ENCODE measurements at regions of chr2 and their contacts with region 1.

Region 1: GRCh38 chr2:74529357-74530238 is at the starts of genes AUP1 and HTRA2:
- DNase-seq: peak; percentile 96
- H3K4me3 Mint-ChIP-seq: peak within 1 kb of the TSS; percentile 98
- H3K27ac Mint-ChIP-seq: peak within 1 kb of the TSS; percentile 91
- H3K4me1 Mint-ChIP-seq: peaks cover 40% of the 10 kb centered on the region
- H3K27me3 Mint-ChIP-seq: no peaks in the 10 kb centered on the region
- total RNA-seq, gene AUP1: 77.4 to 78.5 TPM
- total RNA-seq, gene HTRA2: 39.0 to 39.7 TPM

Region 2: GRCh38 chr2:73736855-73737779 is 792.5 kb before region 1 on chr2 and contains the start of gene TPRKB:
- CTCF ChIA-PET with region 1: no interaction called
- intact Hi-C with region 1: no loop called
- DNase-seq: peak; percentile 99
- H3K4me3 Mint-ChIP-seq: peak within 1 kb of the TSS; percentile 88
- H3K27ac Mint-ChIP-seq: peak within 1 kb of the TSS; percentile 76
- H3K4me1 Mint-ChIP-seq: peaks cover 15% of the 10 kb centered on the region
- H3K27me3 Mint-ChIP-seq: no peaks in the 10 kb centered on the region
- total RNA-seq, gene TPRKB: 30.5 to 32.5 TPM

Region 3: DNA sequence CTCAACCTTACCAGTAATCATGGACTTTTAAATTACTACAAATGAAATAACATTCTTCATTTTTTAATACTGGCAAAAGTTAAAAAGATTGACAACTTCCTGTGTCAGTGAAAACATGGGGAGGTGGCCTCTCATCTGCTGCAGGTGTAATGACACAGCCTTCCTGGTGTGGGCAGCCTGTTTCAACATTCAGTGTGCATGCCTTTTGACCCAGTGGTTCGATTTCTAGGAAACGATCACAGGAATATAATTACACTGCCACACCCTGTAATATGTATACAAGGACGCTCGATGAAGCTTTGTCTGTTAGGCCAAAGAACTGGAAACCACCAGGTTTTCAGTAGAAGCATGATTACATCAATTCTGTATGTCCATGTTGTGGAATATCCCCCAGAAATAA is 262.5 kb before region 1 on chr2:
- CTCF ChIA-PET with region 1: no interaction called
- intact Hi-C with region 1: loop called (anchors 5 kb)
- DNase-seq: peak; percentile 82
- H3K4me3 Mint-ChIP-seq: no peak overlapping the region
- H3K27ac Mint-ChIP-seq: peak overlapping the region; percentile 53
- H3K4me1 Mint-ChIP-seq: peaks cover 12% of the 10 kb centered on the region
- H3K27me3 Mint-ChIP-seq: no peaks in the 10 kb centered on the region

Region 4: GRCh38 chr2:74421221-74421870 is 108.3 kb before region 1 on chr2 and contains the starts of genes C2orf81 and WDR54:
- CTCF ChIA-PET with region 1: no interaction called
- intact Hi-C with region 1: loop called (anchors 1 kb)
- DNase-seq: peak; percentile 90
- H3K4me3 Mint-ChIP-seq: peak within 1 kb of the TSS; percentile 99
- H3K27ac Mint-ChIP-seq: peak within 1 kb of the TSS; percentile 88
- H3K4me1 Mint-ChIP-seq: peaks cover 24% of the 10 kb centered on the region
- H3K27me3 Mint-ChIP-seq: no peaks in the 10 kb centered on the region
- total RNA-seq, gene C2orf81: 2.6 to 3.4 TPM
- total RNA-seq, gene WDR54: 67.2 to 70.8 TPM

Region 5: GRCh38 chr2:74498500-74499266 is 30.9 kb before region 1 on chr2:
- CTCF ChIA-PET with region 1: interaction called, 10 read pairs
- intact Hi-C with region 1: loop called (anchors 5 kb)
- DNase-seq: peak; percentile 45
- H3K4me3 Mint-ChIP-seq: peak overlapping the region; percentile 67
- H3K27ac Mint-ChIP-seq: no peak overlapping the region
- H3K4me1 Mint-ChIP-seq: peaks cover 34% of the 10 kb centered on the region
- H3K27me3 Mint-ChIP-seq: peaks cover 59% of the 10 kb centered on the region

Region 6: GRCh38 chr2:74515981-74516633 is 13.5 kb before region 1 on chr2:
- CTCF ChIA-PET with region 1: interaction called, 3 read pairs
- intact Hi-C with region 1: loop called (anchors 1 kb)
- DNase-seq: peak; percentile 79
- H3K4me3 Mint-ChIP-seq: peak overlapping the region; percentile 51
- H3K27ac Mint-ChIP-seq: no peak overlapping the region
- H3K4me1 Mint-ChIP-seq: peaks cover 17% of the 10 kb centered on the region
- H3K27me3 Mint-ChIP-seq: peaks cover 70% of the 10 kb centered on the region

Measured in activated naive CD4-positive, alpha-beta T cell treated with anti-CD3 and anti-CD28 coated beads for 36 hours (primary cell).